Activated T-helper 1 cell treated with anti-CD3 and anti-CD28 coated beads, Interleukin-12 subunit alpha, Interleukin-12 subunit beta, Interleukin-2, Interleukin-4 antibody, amounts not matched to agents 30 ng/mL and 10 ng/mL and 1 ng/mL, durations not matched to agents 14 hours and 24 hours and 36 hours (primary cell): ENCODE measurements at regions of chr11 and their contacts with region 1.

Region 1: GRCh38 chr11:27698872-27699474 is 1.3 kb downstream of the BDNF start:
- DNase-seq: peak; percentile 21
- H3K4me3 Mint-ChIP-seq: peak overlapping the region; percentile 15
- H3K27ac Mint-ChIP-seq: peak overlapping the region; percentile 44
- H3K4me1 Mint-ChIP-seq: peaks cover 23% of the 10 kb centered on the region
- H3K27me3 Mint-ChIP-seq: peaks cover 66% of the 10 kb centered on the region

Region 2: DNA sequence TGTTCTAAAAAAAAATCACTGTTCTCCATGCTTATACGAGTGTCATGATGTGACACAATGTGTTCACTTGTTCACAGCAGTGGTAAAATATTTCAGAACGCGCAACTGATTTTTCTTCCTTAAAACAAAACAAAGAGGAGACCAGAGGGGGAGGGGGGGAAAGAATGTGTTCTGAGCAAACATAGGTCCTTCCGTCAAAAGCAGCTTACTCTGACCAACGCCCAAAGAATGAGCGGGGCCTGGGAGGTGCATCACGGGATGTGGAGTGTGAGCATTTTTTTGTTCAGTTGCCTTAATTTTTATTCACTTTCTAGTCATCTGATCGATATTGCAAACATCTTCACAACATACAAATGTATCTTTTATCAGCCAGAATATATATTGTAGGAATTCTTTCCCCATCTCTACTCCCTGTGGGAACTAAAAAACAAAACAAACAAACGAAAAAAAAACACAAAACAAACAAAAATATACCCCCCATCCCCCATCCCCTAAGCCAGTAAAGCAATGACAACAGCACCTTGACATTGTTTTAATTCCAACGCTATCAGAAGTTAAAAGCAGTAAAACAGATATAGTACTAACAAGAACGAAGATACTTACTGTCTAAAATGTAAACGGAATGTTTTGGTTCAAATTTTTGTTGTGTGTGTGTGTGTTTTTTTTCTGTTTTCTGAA is 42.0 kb before region 1 on chr11:
- intact Hi-C with region 1: no loop called
- DNase-seq: no peak
- H3K4me3 Mint-ChIP-seq: no peak overlapping the region
- H3K27ac Mint-ChIP-seq: no peak overlapping the region
- H3K4me1 Mint-ChIP-seq: no peaks in the 10 kb centered on the region
- H3K27me3 Mint-ChIP-seq: no peaks in the 10 kb centered on the region

Region 3: GRCh38 chr11:27679136-27680015 is 19.6 kb before region 1 on chr11:
- intact Hi-C with region 1: no loop called
- DNase-seq: no peak
- H3K4me3 Mint-ChIP-seq: no peak overlapping the region
- H3K27ac Mint-ChIP-seq: no peak overlapping the region
- H3K4me1 Mint-ChIP-seq: no peaks in the 10 kb centered on the region
- H3K27me3 Mint-ChIP-seq: no peaks in the 10 kb centered on the region

Region 4: GRCh38 chr11:27722117-27722952 is 23.4 kb after region 1 on chr11:
- intact Hi-C with region 1: loop called (anchors 1 kb)
- DNase-seq: no peak
- H3K4me3 Mint-ChIP-seq: no peak overlapping the region
- H3K27ac Mint-ChIP-seq: no peak overlapping the region
- H3K4me1 Mint-ChIP-seq: no peaks in the 10 kb centered on the region
- H3K27me3 Mint-ChIP-seq: peaks cover 42% of the 10 kb centered on the region

Region 5: DNA sequence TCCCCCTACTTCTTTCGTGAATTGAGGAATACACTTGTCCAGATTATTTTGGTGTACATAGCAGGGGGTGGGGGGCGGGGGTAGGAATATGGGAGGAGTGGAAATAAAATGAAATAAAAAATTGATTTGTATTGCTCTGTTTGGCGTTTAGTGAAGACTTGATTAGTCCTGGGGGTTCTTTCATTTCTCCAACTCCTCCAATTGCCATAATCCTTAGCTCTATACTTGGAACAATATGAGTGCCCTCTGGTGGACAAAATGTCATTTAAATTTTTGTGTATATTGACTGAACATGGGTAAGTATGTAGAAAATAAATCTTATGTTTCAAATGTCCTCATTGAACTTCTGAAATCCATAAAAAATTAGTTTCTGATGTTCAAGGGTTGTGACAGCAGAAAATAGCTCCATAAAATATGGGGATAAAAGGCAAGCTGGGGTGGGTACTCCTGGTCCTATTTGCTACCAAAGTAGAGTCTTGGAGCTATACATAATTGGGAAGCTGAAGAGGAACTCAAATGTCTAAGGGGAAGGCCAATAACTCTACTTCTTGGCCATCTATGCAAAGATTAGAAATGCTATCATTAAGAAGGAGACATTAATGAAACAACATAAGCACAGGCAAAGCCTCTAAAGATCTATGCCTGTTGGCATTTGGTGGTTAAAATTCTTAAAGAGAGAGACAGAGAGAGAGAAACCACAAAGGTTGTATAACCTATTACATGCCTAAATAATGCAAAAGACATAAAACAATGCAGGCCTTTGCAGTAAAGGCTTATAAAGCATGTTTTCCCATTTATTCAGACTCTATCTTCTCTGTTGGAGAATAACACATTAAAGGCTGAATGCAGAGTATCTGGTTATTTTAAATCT is 830.8 kb after region 1 on chr11:
- intact Hi-C with region 1: loop called (anchors 1 kb)
- DNase-seq: no peak
- H3K4me3 Mint-ChIP-seq: no peak overlapping the region
- H3K27ac Mint-ChIP-seq: no peak overlapping the region
- H3K4me1 Mint-ChIP-seq: no peaks in the 10 kb centered on the region
- H3K27me3 Mint-ChIP-seq: no peaks in the 10 kb centered on the region

Region 6: GRCh38 chr11:28697920-28698827 is 999.2 kb after region 1 on chr11:
- intact Hi-C with region 1: loop called (anchors 2 kb)
- DNase-seq: no peak
- H3K4me3 Mint-ChIP-seq: no peak overlapping the region
- H3K27ac Mint-ChIP-seq: no peak overlapping the region
- H3K4me1 Mint-ChIP-seq: no peaks in the 10 kb centered on the region
- H3K27me3 Mint-ChIP-seq: peaks cover 2% of the 10 kb centered on the region

Region 7: GRCh38 chr11:29333993-29334775 is 1635.2 kb after region 1 on chr11:
- intact Hi-C with region 1: loop called (anchors 2 kb)
- DNase-seq: no peak
- H3K4me3 Mint-ChIP-seq: no peak overlapping the region
- H3K27ac Mint-ChIP-seq: no peak overlapping the region
- H3K4me1 Mint-ChIP-seq: no peaks in the 10 kb centered on the region
- H3K27me3 Mint-ChIP-seq: no peaks in the 10 kb centered on the region